ENCODE measurements at regions of chr1 and their contacts with region 1.

Region 1: DNA sequence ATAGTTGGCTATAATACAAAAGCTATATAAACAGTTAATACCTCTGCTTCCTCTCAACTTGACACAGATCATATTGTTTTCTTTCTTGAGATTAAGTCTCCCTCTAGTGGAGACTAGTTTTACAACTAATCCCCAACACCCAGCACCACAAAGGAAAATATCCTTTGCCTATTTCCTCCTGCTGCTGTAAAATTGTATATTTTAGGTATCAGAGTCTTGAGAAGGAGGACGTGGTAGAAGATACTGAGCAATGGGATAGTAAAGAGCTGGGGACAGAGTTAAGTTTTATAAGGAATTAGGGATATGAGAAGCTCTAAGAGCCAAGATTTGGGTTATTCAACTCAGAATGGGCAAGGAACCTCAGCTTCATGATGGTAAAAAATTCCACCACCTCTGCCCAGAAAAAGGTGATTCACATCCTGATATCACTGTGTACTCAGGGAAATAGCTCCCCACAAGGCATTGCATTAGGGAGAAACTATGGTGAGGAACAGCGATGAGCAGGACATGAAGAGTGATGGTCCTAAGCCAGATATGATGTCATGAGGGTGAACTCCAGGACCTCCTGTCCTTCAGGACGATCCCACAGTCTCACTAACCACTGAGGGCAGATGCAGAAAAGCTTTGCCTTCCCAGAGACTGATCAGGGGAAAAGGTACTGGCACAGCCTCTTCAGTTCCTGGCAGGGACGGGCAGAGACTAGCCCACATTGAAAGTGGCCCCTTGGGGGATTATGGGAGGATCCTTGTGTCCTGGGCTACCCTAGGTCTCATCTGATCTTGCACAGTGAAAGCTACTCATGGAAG is 14.7 kb upstream of the CFAP126 start:
- DNase-seq: peak; percentile 78
- H3K4me3 Mint-ChIP-seq: peak overlapping the region; percentile 11
- H3K27ac Mint-ChIP-seq: peak overlapping the region; percentile 37
- H3K4me1 Mint-ChIP-seq: peaks cover 22% of the 10 kb centered on the region
- H3K27me3 Mint-ChIP-seq: no peaks in the 10 kb centered on the region
- CTCF ChIP-seq: peak; percentile 68

Region 2: DNA sequence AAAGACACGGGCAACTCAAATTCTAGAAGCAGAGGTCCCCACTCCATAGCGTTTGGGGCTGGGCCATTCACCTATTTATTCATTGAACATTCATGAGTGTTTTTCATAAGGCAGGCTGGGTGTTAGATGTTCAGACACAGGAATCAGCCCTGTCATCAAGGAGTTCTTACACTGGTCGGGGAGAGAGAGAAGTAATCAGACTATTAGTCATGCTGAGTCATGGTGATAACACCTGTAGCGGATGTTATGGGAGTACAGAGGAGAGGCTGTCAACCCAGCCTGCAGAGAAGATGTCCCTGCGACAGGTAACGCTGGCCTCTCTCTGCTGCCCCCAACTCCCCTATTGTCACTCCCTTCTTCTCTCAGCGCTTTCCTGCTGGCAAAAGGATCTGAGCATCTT is 569.2 kb before region 1 on chr1:
- CTCF ChIA-PET with region 1: no interaction called
- POLR2A ChIA-PET with region 1: no interaction called
- intact Hi-C with region 1: no loop called
- DNase-seq: peak; percentile 72
- H3K4me3 Mint-ChIP-seq: no peak overlapping the region
- H3K27ac Mint-ChIP-seq: no peak overlapping the region
- H3K4me1 Mint-ChIP-seq: peaks cover 10% of the 10 kb centered on the region
- H3K27me3 Mint-ChIP-seq: no peaks in the 10 kb centered on the region
- CTCF ChIP-seq: no peak

Region 3: DNA sequence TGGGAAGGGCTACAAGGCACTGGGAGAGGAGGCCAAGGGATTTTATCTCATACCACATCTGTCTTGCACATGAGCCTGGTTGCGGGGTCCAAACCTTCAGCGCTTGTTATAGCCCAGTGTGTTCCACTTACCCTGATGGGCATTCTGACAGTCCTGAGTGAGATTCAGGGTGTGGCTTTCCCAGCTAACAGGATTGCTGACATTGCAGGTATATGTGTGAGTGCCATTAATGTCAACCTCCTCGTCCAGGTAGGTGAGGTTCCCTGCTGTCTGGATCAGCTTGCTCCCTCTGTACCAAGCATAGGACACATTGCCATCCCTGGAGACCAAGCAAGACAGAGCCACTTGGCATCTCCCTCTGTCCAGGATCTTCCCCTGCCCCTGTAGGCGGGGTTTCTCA is 541.3 kb before region 1 on chr1:
- CTCF ChIA-PET with region 1: no interaction called
- POLR2A ChIA-PET with region 1: no interaction called
- intact Hi-C with region 1: no loop called
- DNase-seq: no peak
- H3K4me3 Mint-ChIP-seq: no peak overlapping the region
- H3K27ac Mint-ChIP-seq: no peak overlapping the region
- H3K4me1 Mint-ChIP-seq: no peaks in the 10 kb centered on the region
- H3K27me3 Mint-ChIP-seq: no peaks in the 10 kb centered on the region
- CTCF ChIP-seq: no peak

Region 4: DNA sequence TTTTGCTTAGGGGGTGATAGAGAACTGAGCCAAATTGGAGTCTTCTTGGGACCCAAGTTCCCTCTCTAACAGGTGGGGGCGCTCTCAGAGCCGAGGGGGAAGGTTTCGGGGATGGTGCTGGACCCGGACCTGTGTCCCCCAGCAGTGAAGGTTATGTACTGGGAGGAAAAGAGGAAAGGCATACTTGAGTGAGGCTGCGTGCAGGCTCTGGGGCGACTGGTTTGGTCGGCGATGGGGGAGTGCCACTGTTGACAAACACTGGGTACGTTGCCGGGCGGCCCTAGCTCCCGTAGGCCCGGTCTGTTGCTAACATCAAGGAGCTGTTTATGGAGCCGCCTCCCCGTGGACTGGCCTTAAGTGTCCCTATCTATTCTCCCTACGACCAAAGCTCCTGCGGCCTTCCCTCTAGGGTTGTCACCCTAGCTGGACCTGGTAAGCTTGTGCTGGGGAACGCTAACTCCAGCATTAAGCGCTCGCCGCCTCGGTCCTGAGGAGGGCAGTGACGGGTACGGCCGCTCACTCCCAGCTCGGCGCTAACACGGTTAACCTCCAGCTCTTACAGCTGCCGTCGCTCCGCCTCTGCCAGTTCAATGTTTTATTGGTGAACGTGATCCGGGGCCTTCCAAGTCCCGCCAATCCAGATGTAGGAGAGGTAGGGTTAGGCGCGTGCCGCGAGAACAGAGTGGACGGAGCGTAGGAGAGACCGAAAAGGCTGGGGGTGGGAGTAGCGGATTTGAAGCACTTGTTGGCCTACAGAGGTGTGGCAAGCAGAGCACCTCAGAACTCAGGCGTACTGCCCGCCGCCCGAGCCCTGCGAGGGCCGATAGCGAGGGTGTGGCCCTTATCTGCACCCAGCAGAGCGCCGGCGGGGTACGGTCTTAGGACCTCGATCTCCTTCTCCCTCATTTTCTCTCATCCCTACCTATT is 216.4 kb before region 1 on chr1 and contains the start of gene PPOX:
- CTCF ChIA-PET with region 1: interaction called, 24 read pairs
- POLR2A ChIA-PET with region 1: no interaction called
- intact Hi-C with region 1: no loop called
- DNase-seq: peak; percentile 100
- H3K4me3 Mint-ChIP-seq: peak within 1 kb of the TSS; percentile 98
- H3K27ac Mint-ChIP-seq: peak within 1 kb of the TSS; percentile 100
- H3K4me1 Mint-ChIP-seq: peaks cover 47% of the 10 kb centered on the region
- H3K27me3 Mint-ChIP-seq: no peaks in the 10 kb centered on the region
- CTCF ChIP-seq: peak; percentile 36
- total RNA-seq, gene PPOX: 30.3 and 32.4 TPM in 2 replicates

Region 5: GRCh38 chr1:161185732-161186311 is 196.6 kb before region 1 on chr1:
- CTCF ChIA-PET with region 1: interaction called, 96 read pairs
- POLR2A ChIA-PET with region 1: interaction called, 8 read pairs
- intact Hi-C with region 1: no loop called
- DNase-seq: no peak
- H3K4me3 Mint-ChIP-seq: no peak overlapping the region
- H3K27ac Mint-ChIP-seq: peak overlapping the region; percentile 36
- H3K4me1 Mint-ChIP-seq: peaks cover 33% of the 10 kb centered on the region
- H3K27me3 Mint-ChIP-seq: no peaks in the 10 kb centered on the region
- CTCF ChIP-seq: no peak

Region 6: GRCh38 chr1:161209790-161210409 is 172.5 kb before region 1 on chr1:
- CTCF ChIA-PET with region 1: interaction called, 69 read pairs
- POLR2A ChIA-PET with region 1: interaction called, 32 read pairs
- intact Hi-C with region 1: loop called (anchors 2 kb)
- DNase-seq: peak; percentile 91
- H3K4me3 Mint-ChIP-seq: no peak overlapping the region
- H3K27ac Mint-ChIP-seq: no peak overlapping the region
- H3K4me1 Mint-ChIP-seq: peaks cover 25% of the 10 kb centered on the region
- H3K27me3 Mint-ChIP-seq: no peaks in the 10 kb centered on the region
- CTCF ChIP-seq: peak; percentile 95

Region 7: GRCh38 chr1:161351482-161351881 is 30.9 kb before region 1 on chr1:
- CTCF ChIA-PET with region 1: interaction called, 25 read pairs
- POLR2A ChIA-PET with region 1: no interaction called
- intact Hi-C with region 1: no loop called
- DNase-seq: no peak
- H3K4me3 Mint-ChIP-seq: no peak overlapping the region
- H3K27ac Mint-ChIP-seq: peak overlapping the region; percentile 7
- H3K4me1 Mint-ChIP-seq: no peaks in the 10 kb centered on the region
- H3K27me3 Mint-ChIP-seq: no peaks in the 10 kb centered on the region
- CTCF ChIP-seq: no peak

Region 8: DNA sequence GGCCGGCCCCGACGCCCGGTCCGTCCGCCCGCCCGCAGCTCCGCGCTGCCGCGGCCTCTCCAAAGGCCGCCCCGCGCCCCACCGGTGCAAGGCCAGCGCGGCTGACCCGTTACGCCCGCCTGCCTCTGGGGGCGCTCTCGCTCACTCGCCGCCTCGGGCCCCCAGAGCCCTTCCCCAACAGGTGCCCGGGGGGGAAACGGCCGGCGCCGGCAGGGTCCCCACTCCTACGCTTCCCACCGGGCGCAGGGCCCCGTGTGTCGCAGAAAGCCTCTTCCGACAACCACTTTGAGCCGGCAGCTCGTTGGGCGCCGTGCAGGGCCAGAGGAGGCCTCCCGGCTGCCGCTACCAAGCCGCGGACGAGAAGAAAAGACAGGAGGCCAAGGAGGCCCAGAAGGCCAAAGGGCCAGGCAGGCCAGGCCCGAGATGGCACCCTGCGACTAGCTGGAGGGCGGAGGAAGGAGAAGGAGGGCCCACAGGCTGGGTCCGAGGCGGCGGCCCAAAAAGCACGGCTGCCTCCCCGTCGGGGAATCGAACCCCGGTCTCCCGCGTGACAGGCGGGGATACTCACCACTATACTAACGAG is 58.0 kb after region 1 on chr1:
- CTCF ChIA-PET with region 1: interaction called, 10 read pairs
- POLR2A ChIA-PET with region 1: no interaction called
- intact Hi-C with region 1: no loop called
- DNase-seq: peak; percentile 84
- H3K4me3 Mint-ChIP-seq: peak overlapping the region; percentile 89
- H3K27ac Mint-ChIP-seq: peak overlapping the region; percentile 87
- H3K4me1 Mint-ChIP-seq: no peaks in the 10 kb centered on the region
- H3K27me3 Mint-ChIP-seq: no peaks in the 10 kb centered on the region
- CTCF ChIP-seq: peak; percentile 87

Region 9: GRCh38 chr1:161848676-161849075 is 466.3 kb after region 1 on chr1:
- CTCF ChIA-PET with region 1: no interaction called
- POLR2A ChIA-PET with region 1: no interaction called
- intact Hi-C with region 1: no loop called
- DNase-seq: no peak
- H3K4me3 Mint-ChIP-seq: no peak overlapping the region
- H3K27ac Mint-ChIP-seq: no peak overlapping the region
- H3K4me1 Mint-ChIP-seq: peaks cover 15% of the 10 kb centered on the region
- H3K27me3 Mint-ChIP-seq: no peaks in the 10 kb centered on the region
- CTCF ChIP-seq: no peak